ENCODE measurements at regions of chr3 and their contacts with region 1.

Region 1: GRCh38 chr3:148494451-148494850 is 203.3 kb upstream of the AGTR1 start:
- DNase-seq: no peak
- ATAC-seq: no peak

Region 2: DNA sequence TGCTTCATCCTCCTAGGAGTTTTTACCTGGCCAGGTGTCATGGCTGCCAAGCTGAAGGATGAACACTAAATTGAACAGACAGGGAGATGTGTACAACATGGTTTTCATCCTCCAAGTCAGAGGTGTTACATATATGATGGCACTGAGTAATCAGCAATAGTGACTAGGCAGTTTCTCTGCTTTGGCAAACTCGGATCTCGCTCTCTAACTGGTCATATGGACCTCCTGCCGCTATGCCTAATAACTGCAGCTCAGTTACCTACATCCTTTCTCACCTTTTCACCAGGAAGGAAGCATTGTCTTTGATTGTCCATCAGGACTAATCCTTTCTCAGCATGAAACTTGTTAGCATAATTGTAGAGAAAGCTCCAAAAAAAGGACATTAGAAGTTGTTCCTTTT is 1713.4 kb before region 1 on chr3:
- intact Hi-C with region 1: loop called (anchors 5 kb)
- DNase-seq: no peak
- ATAC-seq: no peak

Measured in sciatic nerve (tissue), 2 donors.